ENCODE measurements at regions of chr11 and their contacts with region 1.

Region 1: DNA sequence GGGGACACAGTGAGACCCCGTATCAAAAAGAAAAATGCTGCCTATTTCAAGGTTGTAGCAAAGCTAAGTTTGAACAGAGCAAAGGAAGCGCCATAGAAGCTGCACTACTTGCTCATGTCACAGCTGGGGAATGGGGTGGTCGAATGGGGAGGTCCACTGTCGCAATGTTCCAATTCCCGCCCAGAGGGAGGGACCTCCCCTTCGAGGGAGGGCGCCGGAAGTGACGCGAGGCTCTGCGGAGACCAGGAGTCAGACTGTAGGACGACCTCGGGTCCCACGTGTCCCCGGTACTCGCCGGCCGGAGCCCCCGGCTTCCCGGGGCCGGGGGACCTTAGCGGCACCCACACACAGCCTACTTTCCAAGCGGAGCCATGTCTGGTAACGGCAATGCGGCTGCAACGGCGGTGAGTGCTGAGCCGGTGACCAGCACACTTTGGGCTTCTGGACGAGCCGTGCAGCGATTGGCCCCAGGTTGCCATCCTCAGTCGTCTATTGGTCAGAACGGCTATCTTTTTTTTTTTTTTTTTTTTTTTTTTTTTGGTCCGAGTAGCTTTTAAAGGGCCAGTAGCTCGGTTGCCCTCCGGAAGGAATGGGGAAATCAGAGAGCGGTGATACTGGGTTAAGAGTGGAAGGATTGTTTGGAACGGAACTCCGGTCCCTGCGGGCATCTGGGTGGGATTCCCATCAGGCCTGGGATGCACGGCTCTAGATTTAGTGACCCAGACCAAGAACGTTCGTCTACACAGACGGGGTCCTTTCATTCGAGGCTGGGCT is at the start of gene HMBS:
- DNase-seq: peak; percentile 99
- H3K4me3 ChIP-seq: peak within 1 kb of the TSS; percentile 80
- H3K27ac ChIP-seq: peak within 1 kb of the TSS; percentile 97
- H3K4me1 ChIP-seq: peaks cover 11% of the 10 kb centered on the region
- H3K27me3 ChIP-seq: no peaks in the 10 kb centered on the region
- CTCF ChIP-seq: no peak
- total RNA-seq, gene HMBS: 72.5 and 80.6 TPM in 2 replicates

Region 2: GRCh38 chr11:118652681-118653181 is 432.1 kb before region 1 on chr11:
- CTCF ChIA-PET with region 1: no interaction called
- POLR2A ChIA-PET with region 1: no interaction called
- intact Hi-C with region 1: no loop called
- DNase-seq: no peak
- H3K4me3 ChIP-seq: no peak overlapping the region
- H3K27ac ChIP-seq: no peak overlapping the region
- H3K4me1 ChIP-seq: no peaks in the 10 kb centered on the region
- H3K27me3 ChIP-seq: no peaks in the 10 kb centered on the region
- CTCF ChIP-seq: no peak

Region 3: GRCh38 chr11:118735203-118735602 is 349.6 kb before region 1 on chr11:
- CTCF ChIA-PET with region 1: no interaction called
- POLR2A ChIA-PET with region 1: no interaction called
- intact Hi-C with region 1: no loop called
- DNase-seq: no peak
- H3K4me3 ChIP-seq: no peak overlapping the region
- H3K27ac ChIP-seq: no peak overlapping the region
- H3K4me1 ChIP-seq: peaks cover 5% of the 10 kb centered on the region
- H3K27me3 ChIP-seq: no peaks in the 10 kb centered on the region
- CTCF ChIP-seq: no peak

Region 4: GRCh38 chr11:118911892-118912744 is 172.7 kb before region 1 on chr11:
- CTCF ChIA-PET with region 1: no interaction called
- POLR2A ChIA-PET with region 1: no interaction called
- intact Hi-C with region 1: no loop called
- DNase-seq: peak; percentile 94
- H3K4me3 ChIP-seq: no peak overlapping the region
- H3K27ac ChIP-seq: peak overlapping the region; percentile 88
- H3K4me1 ChIP-seq: peaks cover 97% of the 10 kb centered on the region
- H3K27me3 ChIP-seq: no peaks in the 10 kb centered on the region
- CTCF ChIP-seq: no peak

Region 5: DNA sequence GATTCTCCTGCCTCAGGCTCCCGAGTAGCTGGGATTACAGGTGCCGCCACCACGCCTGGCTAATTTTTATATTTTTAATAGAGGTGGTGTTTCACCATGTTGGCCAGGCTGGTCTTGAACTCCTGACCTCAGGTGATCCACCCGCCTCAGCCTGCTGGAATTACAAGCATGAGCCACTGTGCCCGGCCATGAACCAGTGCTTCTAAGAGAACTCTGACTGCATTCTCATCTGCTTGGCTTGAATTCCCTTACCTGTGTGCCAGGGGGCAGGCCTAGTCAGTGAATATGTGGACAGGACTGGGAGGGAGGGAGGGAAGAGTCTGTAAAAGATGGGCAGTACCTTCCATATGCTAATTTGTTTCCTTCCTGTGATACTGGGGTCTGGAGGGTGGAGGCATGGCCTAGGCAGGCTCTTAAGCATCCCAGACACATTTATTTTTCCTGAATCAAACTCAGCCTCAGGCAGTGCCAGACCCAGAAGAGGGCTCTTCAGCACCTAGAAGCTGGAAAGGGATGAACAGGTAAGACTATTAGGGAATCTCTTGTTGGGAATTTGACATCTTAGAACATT is 73.3 kb before region 1 on chr11:
- CTCF ChIA-PET with region 1: no interaction called
- POLR2A ChIA-PET with region 1: interaction called, 16 read pairs
- intact Hi-C with region 1: no loop called
- DNase-seq: no peak
- H3K4me3 ChIP-seq: no peak overlapping the region
- H3K27ac ChIP-seq: no peak overlapping the region
- H3K4me1 ChIP-seq: peaks cover 4% of the 10 kb centered on the region
- H3K27me3 ChIP-seq: no peaks in the 10 kb centered on the region
- CTCF ChIP-seq: no peak

Region 6: GRCh38 chr11:119029340-119030028 is 55.4 kb before region 1 on chr11:
- CTCF ChIA-PET with region 1: no interaction called
- POLR2A ChIA-PET with region 1: no interaction called
- intact Hi-C with region 1: no loop called
- DNase-seq: no peak
- H3K4me3 ChIP-seq: peak overlapping the region; percentile 67
- H3K27ac ChIP-seq: peak overlapping the region; percentile 75
- H3K4me1 ChIP-seq: peaks cover 13% of the 10 kb centered on the region
- H3K27me3 ChIP-seq: no peaks in the 10 kb centered on the region
- CTCF ChIP-seq: no peak

Region 7: DNA sequence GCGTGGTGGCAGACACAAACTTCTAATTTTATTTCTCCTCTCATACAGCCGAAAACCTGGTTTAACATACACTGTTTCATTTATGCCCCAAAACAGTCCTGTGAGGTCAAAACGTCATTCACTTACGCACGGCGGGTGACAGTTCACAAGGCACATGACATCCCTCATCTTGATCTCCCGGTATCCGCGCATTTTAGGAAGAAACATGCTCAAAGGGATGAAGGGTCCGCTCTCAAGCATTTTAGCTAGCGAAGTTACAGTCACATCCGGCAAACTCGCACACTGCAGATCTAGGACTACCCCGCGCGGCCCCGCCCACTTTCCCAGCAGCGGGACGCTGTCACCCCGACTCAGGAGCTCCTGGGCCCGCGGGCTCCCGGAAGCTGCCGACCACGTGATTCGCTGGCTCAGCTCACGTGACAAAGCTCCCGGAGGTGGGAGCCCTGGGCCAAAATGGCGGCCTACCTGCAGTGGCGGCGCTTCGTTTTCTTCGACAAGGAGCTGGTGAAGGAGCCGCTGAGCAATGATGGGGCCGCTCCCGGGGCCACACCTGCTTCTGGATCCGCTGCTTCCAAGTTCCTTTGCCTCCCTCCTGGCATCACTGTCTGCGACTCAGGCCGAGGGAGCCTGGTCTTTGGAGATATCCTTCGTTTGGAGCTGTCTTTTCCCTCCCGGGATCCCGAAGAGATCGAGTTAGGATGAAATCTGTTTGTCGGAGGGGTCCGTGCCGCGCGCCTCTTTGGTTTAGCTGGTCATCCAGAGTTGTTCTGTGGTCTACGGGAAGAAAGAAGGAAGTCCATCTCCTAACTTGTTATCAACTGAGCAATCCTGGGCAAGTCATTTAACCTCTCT is 17.3 kb before region 1 on chr11 and contains the start of gene VPS11:
- CTCF ChIA-PET with region 1: interaction called, 6 read pairs
- POLR2A ChIA-PET with region 1: interaction called, 15 read pairs
- intact Hi-C with region 1: loop called (anchors 2 kb)
- DNase-seq: peak; percentile 99
- H3K4me3 ChIP-seq: peak within 1 kb of the TSS; percentile 71
- H3K27ac ChIP-seq: peak within 1 kb of the TSS; percentile 73
- H3K4me1 ChIP-seq: peaks cover 5% of the 10 kb centered on the region
- H3K27me3 ChIP-seq: no peaks in the 10 kb centered on the region
- CTCF ChIP-seq: no peak
- total RNA-seq, gene VPS11: 26.7 and 32.4 TPM in 2 replicates

Region 8: GRCh38 chr11:119095066-119095880 is 10.4 kb after region 1 on chr11:
- CTCF ChIA-PET with region 1: interaction called, 3 read pairs
- POLR2A ChIA-PET with region 1: interaction called, 24 read pairs
- intact Hi-C with region 1: no loop called
- DNase-seq: peak; percentile 100
- H3K4me3 ChIP-seq: peak overlapping the region; percentile 92
- H3K27ac ChIP-seq: peak overlapping the region; percentile 95
- H3K4me1 ChIP-seq: peaks cover 36% of the 10 kb centered on the region
- H3K27me3 ChIP-seq: no peaks in the 10 kb centered on the region
- CTCF ChIP-seq: 0 out of 2 replicates have a peak, but pooled peaks have one; percentile 6